Aorta (tissue), 5 donors: ENCODE measurements at regions of chr17 and their contacts with region 1.

Region 1: GRCh38 chr17:47615766-47616424 is 33.8 kb upstream of the KPNB1 start:
- DNase-seq: no peak
- ATAC-seq: peak; percentile 57
- H3K4me3 ChIP-seq: no peak overlapping the region
- H3K27ac ChIP-seq: no peak overlapping the region
- H3K4me1 ChIP-seq: no peaks in the 10 kb centered on the region
- H3K27me3 ChIP-seq: no peaks in the 10 kb centered on the region

Region 2: DNA sequence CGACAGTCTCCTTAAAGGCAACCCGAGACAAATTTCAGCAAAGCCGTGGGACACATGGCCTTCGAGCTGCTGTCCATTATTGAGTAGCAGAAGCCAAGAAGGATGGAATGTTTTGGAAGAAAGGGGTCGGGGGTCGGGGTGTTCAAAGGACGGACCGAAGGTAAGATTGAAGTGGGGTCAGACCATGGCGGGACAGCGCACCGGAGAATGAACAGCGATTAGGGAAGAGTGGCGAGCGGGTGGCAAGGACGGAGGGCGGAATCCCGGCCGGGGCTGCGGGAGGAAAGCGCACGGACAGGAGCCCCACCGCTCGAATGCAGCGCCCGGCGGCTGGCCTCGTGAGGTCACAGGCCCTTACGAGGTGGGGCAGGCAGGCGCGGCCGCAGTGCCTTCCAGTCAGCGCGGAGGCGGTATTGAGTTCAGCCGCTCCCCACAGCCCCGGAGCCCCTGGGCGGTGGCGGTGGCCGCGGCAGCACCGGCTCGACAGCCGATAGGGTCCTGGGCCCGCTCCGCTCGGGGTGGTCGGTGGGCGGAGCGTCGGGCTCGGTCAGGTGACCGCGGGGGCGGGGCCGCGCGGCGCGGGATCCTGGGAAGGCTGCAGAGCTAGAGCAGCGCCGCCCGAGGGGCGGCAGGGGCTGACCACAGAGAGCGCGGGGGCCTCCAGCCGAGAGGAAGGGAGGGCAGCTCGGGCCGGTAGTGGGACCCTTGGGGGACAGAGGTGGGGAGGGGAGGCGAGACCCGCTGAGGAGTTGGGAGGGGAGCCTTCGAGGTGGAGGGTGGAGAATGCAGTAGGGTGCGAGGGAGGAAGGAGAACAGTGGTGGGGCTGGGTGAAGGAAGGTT is 292.3 kb before region 1 on chr17 and contains the start of gene EFCAB13:
- intact Hi-C with region 1: loop called in 1 of 2 experiments (anchors 10 kb)
- DNase-seq: peak; percentile 94 to 97
- ATAC-seq: peak; percentile 99
- H3K4me3 ChIP-seq: peak within 1 kb of the TSS; percentile 46 to 58
- H3K27ac ChIP-seq: peak within 1 kb of the TSS; percentile 38 to 57
- H3K4me1 ChIP-seq: no peaks in the 10 kb centered on the region
- H3K27me3 ChIP-seq: no peaks in the 10 kb centered on the region
- total RNA-seq, gene EFCAB13: 28.1 to 34.2 TPM

Region 3: DNA sequence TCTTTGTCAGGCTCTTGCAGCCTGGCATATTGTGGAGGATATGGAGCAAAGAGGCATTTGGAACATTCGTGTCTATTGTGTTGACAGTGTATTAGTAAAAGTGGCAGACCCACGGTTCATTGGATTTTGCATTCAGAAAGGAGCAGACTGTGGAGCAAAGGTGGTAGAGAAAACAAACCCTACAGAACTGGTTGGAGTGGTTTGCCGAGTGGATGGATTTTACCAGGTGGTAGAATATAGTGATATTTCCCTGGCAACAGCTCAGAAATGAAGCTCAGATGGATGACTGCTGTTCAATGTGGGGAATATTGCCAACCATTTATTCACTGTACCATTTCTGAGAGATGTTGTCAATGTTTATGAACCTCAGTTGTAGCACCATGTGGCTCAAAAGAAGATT is 247.6 kb before region 1 on chr17:
- intact Hi-C with region 1: loop called in 1 of 2 experiments (anchors 10 kb)
- DNase-seq: no peak
- ATAC-seq: no peak
- H3K4me3 ChIP-seq: no peak overlapping the region
- H3K27ac ChIP-seq: no peak overlapping the region
- H3K4me1 ChIP-seq: no peaks in the 10 kb centered on the region
- H3K27me3 ChIP-seq: no peaks in the 10 kb centered on the region

Region 4: DNA sequence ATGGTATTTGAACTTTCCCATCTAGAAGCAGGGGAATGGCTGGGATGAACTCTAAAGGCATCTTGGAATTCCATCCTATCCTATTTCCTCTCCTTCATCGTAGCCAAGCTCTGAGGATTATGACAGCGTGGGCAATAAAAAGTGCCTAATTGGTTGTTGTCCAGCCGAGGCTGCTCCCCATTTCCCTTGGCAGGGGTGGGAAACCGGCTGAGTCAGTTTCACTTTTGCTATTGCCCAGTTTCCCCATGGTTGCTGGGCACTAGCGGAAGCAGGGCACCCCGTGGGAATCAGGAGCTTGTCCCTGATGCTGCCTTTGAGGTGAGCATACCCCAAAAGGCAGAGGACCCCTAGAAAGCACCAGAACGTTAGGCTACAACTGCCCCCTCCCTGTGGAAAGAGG is 266.4 kb after region 1 on chr17:
- intact Hi-C with region 1: no loop called
- DNase-seq: peak; percentile 63 to 76
- ATAC-seq: no peak
- H3K4me3 ChIP-seq: no peak overlapping the region
- H3K27ac ChIP-seq: no peak overlapping the region
- H3K4me1 ChIP-seq: no peaks in the 10 kb centered on the region
- H3K27me3 ChIP-seq: no peaks in the 10 kb centered on the region